A549 (cell line): ENCODE measurements at regions of chr12 and their contacts with region 1.

Region 1: GRCh38 chr12:132638541-132639418 is 20.2 kb downstream of the P2RX2 start:
- DNase-seq: peak; percentile 67 to 71
- ATAC-seq: peak; percentile 75 to 84
- H3K4me3 ChIP-seq: no peak overlapping the region
- H3K27ac ChIP-seq: no peak overlapping the region
- H3K4me1 ChIP-seq: no peaks in the 10 kb centered on the region
- CTCF ChIP-seq: peak; percentile 80
- EP300 ChIP-seq: no peak
- POLR2A ChIP-seq: no peak
- RAD21 ChIP-seq: peak; percentile 45 to 48

Region 2: DNA sequence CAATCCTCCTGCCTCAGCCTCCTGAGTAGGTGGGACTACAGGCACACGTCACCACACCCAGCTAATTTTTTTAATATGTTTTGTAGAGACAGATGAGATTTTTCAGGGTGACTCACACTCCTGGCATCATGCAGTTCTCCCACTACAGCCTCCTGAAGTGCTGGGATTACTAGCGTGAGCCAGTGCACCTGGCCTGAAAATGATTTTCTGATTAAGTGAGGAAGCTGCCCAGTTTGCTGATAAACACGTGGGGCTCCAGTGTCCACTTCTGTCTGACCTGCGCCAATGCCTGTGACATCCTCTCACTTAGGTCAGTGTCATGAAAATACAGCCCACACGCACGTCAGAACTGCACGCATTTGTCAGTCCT is 964.9 kb before region 1 on chr12:
- CTCF ChIA-PET with region 1: no interaction called
- POLR2A ChIA-PET with region 1: no interaction called
- DNase-seq: no peak
- ATAC-seq: peak in 1 of 2 experiments; percentile 9; a peak in 1 of 6 replicates
- H3K4me3 ChIP-seq: no peak overlapping the region
- H3K27ac ChIP-seq: no peak overlapping the region
- H3K4me1 ChIP-seq: no peaks in the 10 kb centered on the region
- CTCF ChIP-seq: no peak
- EP300 ChIP-seq: no peak
- POLR2A ChIP-seq: no peak
- RAD21 ChIP-seq: no peak

Region 3: GRCh38 chr12:132600048-132601032 is 38.4 kb before region 1 on chr12:
- CTCF ChIA-PET with region 1: interaction called, 46 read pairs
- POLR2A ChIA-PET with region 1: no interaction called
- DNase-seq: peak; percentile 76 to 78
- ATAC-seq: peak; percentile 84 to 91
- H3K4me3 ChIP-seq: peak overlapping the region; percentile 36
- H3K27ac ChIP-seq: peak overlapping the region; percentile 38 to 78; a peak in 5 of 6 replicates
- H3K4me1 ChIP-seq: peaks cover 11% of the 10 kb centered on the region; the same call in 1 of the 3 replicates
- CTCF ChIP-seq: peak; percentile 74
- EP300 ChIP-seq: no peak
- POLR2A ChIP-seq: no peak
- RAD21 ChIP-seq: peak; percentile 72 to 75

Region 4: GRCh38 chr12:132614861-132615578 is 23.8 kb before region 1 on chr12:
- CTCF ChIA-PET with region 1: interaction called, 15 read pairs
- POLR2A ChIA-PET with region 1: no interaction called
- DNase-seq: peak; percentile 80 to 89
- ATAC-seq: peak; percentile 78 to 89
- H3K4me3 ChIP-seq: no peak overlapping the region
- H3K27ac ChIP-seq: no peak overlapping the region
- H3K4me1 ChIP-seq: peaks cover 10% of the 10 kb centered on the region
- CTCF ChIP-seq: peak; percentile 94
- EP300 ChIP-seq: no peak
- POLR2A ChIP-seq: no peak
- RAD21 ChIP-seq: peak; percentile 85 to 92

Region 5: GRCh38 chr12:132622437-132623334 is 16.1 kb before region 1 on chr12:
- CTCF ChIA-PET with region 1: interaction called, 15 read pairs
- POLR2A ChIA-PET with region 1: no interaction called
- DNase-seq: no peak
- ATAC-seq: no peak; a peak in 2 of 6 replicates
- H3K4me3 ChIP-seq: no peak overlapping the region
- H3K27ac ChIP-seq: no peak overlapping the region
- H3K4me1 ChIP-seq: peaks cover 10% of the 10 kb centered on the region
- CTCF ChIP-seq: no peak
- EP300 ChIP-seq: no peak
- POLR2A ChIP-seq: no peak
- RAD21 ChIP-seq: no peak

Region 6: GRCh38 chr12:132651444-132652100 is 12.8 kb after region 1 on chr12:
- CTCF ChIA-PET with region 1: interaction called, 33 read pairs
- POLR2A ChIA-PET with region 1: no interaction called
- DNase-seq: no peak
- ATAC-seq: no peak; a peak in 1 of 6 replicates
- H3K4me3 ChIP-seq: no peak overlapping the region
- H3K27ac ChIP-seq: no peak overlapping the region
- H3K4me1 ChIP-seq: no peaks in the 10 kb centered on the region
- CTCF ChIP-seq: no peak
- EP300 ChIP-seq: no peak
- POLR2A ChIP-seq: no peak
- RAD21 ChIP-seq: no peak

Region 7: GRCh38 chr12:133156125-133156690 is 517.4 kb after region 1 on chr12:
- CTCF ChIA-PET with region 1: no interaction called
- POLR2A ChIA-PET with region 1: no interaction called
- DNase-seq: peak in 1 of 2 experiments; percentile 17
- ATAC-seq: no peak
- H3K4me3 ChIP-seq: no peak overlapping the region
- H3K27ac ChIP-seq: no peak overlapping the region
- H3K4me1 ChIP-seq: no peaks in the 10 kb centered on the region
- CTCF ChIP-seq: no peak
- EP300 ChIP-seq: no peak
- POLR2A ChIP-seq: no peak
- RAD21 ChIP-seq: no peak